ENCODE measurements at regions of chr4 and their contacts with region 1.

Region 1: GRCh38 chr4:139734875-139735380 is 69.3 kb downstream of the MGST2 start:
- DNase-seq: peak; percentile 95

Region 2: DNA sequence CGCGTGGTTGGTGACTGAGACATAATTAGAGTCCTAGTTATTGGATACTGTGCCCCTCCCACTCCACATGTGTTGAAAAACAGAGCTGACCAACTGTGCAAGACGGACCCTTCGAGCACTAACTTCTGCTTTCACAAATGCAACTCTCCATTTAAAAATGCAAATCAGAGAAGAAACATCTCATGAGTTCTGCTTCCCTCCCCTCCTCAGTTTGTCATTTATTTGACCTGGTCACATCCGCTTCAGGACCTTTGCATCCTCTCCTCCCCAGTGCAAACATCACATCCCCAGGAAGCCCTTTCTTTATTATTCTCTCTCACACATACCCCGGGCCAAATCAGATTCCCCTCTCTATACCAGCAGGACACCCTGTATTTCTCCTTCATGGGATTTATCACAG is 757.4 kb before region 1 on chr4:
- intact Hi-C with region 1: no loop called
- DNase-seq: no peak

Region 3: GRCh38 chr4:139665690-139666529 is 69.0 kb before region 1 on chr4 and contains the start of gene MGST2:
- intact Hi-C with region 1: loop called (anchors 2 kb)
- DNase-seq: peak; percentile 91
- total RNA-seq, gene MGST2: 90.7 TPM

Region 4: GRCh38 chr4:140004549-140004895 is 269.6 kb after region 1 on chr4:
- intact Hi-C with region 1: loop called (anchors 5 kb)
- DNase-seq: peak; percentile 82

Region 5: GRCh38 chr4:140049024-140049848 is 314.3 kb after region 1 on chr4:
- intact Hi-C with region 1: loop called (anchors 2 kb)
- DNase-seq: peak; percentile 79

Region 6: GRCh38 chr4:140326395-140326993 is 591.6 kb after region 1 on chr4:
- intact Hi-C with region 1: loop called (anchors 10 kb)
- DNase-seq: no peak

Measured in cardiac septum (tissue), 1 donor.